Dorsolateral prefrontal cortex (tissue), 120 donors: ENCODE measurements at regions of chr9 and their contacts with region 1.

Region 1: GRCh38 chr9:81521892-81522291 is 167.5 kb downstream of the TLE1 start:
- DNase-seq: no peak
- H3K4me3 ChIP-seq: no peak overlapping the region
- H3K27ac ChIP-seq: no peak overlapping the region
- H3K27me3 ChIP-seq: peaks cover 0 to 20% (median 0%) of the 10 kb centered on the region in 45 donors
- CTCF ChIP-seq: no peak

Region 2: GRCh38 chr9:81848472-81848871 is 326.6 kb after region 1 on chr9:
- intact Hi-C with region 1: loop called in 1 of 2 experiments (anchors 2 kb)
- DNase-seq: no peak
- H3K4me3 ChIP-seq: no peak overlapping the region
- H3K27ac ChIP-seq: no peak overlapping the region
- H3K27me3 ChIP-seq: peaks cover 0 to 29% (median 0%) of the 10 kb centered on the region in 45 donors
- CTCF ChIP-seq: peak in 55 of 56 donors; percentile 15 to 75 (median 59)